BJ (cell line): ENCODE measurements at regions of chr16 and their contacts with region 1.

Region 1: DNA sequence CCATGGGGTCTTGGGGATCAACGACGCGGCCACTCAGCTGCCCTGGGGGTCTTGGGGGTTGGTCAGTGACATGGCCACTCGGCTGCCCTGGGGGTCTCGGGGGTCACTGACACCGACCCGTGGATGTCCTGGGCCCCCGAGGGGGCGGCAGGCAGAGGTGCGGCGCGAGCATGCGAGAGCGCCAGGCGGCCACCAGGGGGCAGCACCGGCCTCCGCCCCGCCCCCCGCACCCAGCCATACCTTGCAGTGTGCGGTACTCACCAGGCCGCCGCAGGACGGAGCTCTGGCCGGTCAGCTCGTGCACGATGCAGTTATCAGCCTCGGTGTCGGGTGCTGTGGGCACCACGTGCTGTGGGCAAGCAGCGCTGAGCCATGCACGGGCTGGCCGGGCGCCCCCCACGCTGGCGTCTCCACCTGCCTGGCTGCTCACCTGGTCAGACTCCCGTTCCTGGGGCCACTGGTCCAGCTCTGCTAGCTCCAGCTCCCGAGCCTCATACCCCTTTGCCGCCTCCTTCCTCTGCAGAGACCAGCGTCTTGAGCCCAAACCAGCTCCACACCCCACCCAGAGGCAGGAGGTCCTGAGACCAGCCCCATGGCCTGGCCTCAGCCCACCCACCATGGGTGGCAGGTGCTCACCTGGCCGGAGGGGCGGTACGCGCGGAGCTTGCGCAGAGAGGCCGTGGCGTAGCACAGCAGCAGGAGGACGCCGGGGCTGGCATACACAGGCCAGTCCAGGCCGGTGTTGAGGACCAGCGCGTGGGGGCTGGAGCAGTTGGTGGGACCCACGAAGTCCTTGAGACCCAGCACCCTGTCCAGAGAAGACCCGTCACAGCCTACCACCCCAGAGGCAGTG is 31.2 kb downstream of the CTU2 start:
- DNase-seq: no peak
- H3K4me3 ChIP-seq: no peak overlapping the region
- H3K27me3 ChIP-seq: no peaks in the 10 kb centered on the region
- CTCF ChIP-seq: peak; percentile 85

Region 2: GRCh38 chr16:88713568-88714419 is 23.7 kb before region 1 on chr16:
- CTCF ChIA-PET with region 1: interaction called, 14 read pairs
- POLR2A ChIA-PET with region 1: no interaction called
- DNase-seq: no peak
- H3K4me3 ChIP-seq: no peak overlapping the region
- H3K27me3 ChIP-seq: no peaks in the 10 kb centered on the region
- CTCF ChIP-seq: no peak

Region 3: GRCh38 chr16:88754912-88755744 is 17.6 kb after region 1 on chr16:
- CTCF ChIA-PET with region 1: interaction called, 21 read pairs
- POLR2A ChIA-PET with region 1: no interaction called
- DNase-seq: no peak
- H3K4me3 ChIP-seq: no peak overlapping the region
- H3K27me3 ChIP-seq: no peaks in the 10 kb centered on the region
- CTCF ChIP-seq: peak; percentile 63

Region 4: GRCh38 chr16:88770461-88771293 is 33.2 kb after region 1 on chr16:
- CTCF ChIA-PET with region 1: interaction called, 26 read pairs
- POLR2A ChIA-PET with region 1: no interaction called
- DNase-seq: no peak
- H3K4me3 ChIP-seq: no peak overlapping the region
- H3K27me3 ChIP-seq: no peaks in the 10 kb centered on the region
- CTCF ChIP-seq: no peak

Region 5: GRCh38 chr16:88799569-88800276 is 62.2 kb after region 1 on chr16:
- CTCF ChIA-PET with region 1: interaction called, 19 read pairs
- POLR2A ChIA-PET with region 1: no interaction called
- DNase-seq: no peak
- H3K4me3 ChIP-seq: no peak overlapping the region
- H3K27me3 ChIP-seq: no peaks in the 10 kb centered on the region
- CTCF ChIP-seq: no peak

Region 6: GRCh38 chr16:88856828-88857733 is 119.6 kb after region 1 on chr16 and contains the starts of genes GALNS and TRAPPC2L:
- CTCF ChIA-PET with region 1: interaction called, 12 read pairs
- POLR2A ChIA-PET with region 1: no interaction called
- DNase-seq: peak; percentile 46
- H3K4me3 ChIP-seq: peak within 1 kb of the TSS; percentile 96
- H3K27me3 ChIP-seq: no peaks in the 10 kb centered on the region
- CTCF ChIP-seq: no peak
- polyA plus RNA-seq, gene GALNS: 6.3 and 9.7 TPM in 2 replicates
- polyA plus RNA-seq, gene TRAPPC2L: 84.8 and 116 TPM in 2 replicates